Naive thymus-derived CD4-positive, alpha-beta T cell (primary cell): ENCODE measurements at regions of chr1 and their contacts with region 1.

Region 1: GRCh38 chr1:239951511-239952140 is 140.1 kb upstream of the FMN2 start:
- DNase-seq: peak in 8 of 9 donors; percentile 8 to 41 (median 28)
- ATAC-seq: peak; percentile 39
- H3K4me3 ChIP-seq: no peak overlapping the region
- H3K4me3 Mint-ChIP-seq: no peak overlapping the region
- H3K27ac ChIP-seq: no peak overlapping the region
- H3K27ac Mint-ChIP-seq: no peak overlapping the region
- H3K4me1 ChIP-seq: no peaks in the 10 kb centered on the region
- H3K4me1 Mint-ChIP-seq: no peaks in the 10 kb centered on the region
- H3K27me3 ChIP-seq: no peaks in the 10 kb centered on the region
- H3K27me3 Mint-ChIP-seq: peaks cover 0 to 17% (median 4%) of the 10 kb centered on the region in 5 donors

Region 2: DNA sequence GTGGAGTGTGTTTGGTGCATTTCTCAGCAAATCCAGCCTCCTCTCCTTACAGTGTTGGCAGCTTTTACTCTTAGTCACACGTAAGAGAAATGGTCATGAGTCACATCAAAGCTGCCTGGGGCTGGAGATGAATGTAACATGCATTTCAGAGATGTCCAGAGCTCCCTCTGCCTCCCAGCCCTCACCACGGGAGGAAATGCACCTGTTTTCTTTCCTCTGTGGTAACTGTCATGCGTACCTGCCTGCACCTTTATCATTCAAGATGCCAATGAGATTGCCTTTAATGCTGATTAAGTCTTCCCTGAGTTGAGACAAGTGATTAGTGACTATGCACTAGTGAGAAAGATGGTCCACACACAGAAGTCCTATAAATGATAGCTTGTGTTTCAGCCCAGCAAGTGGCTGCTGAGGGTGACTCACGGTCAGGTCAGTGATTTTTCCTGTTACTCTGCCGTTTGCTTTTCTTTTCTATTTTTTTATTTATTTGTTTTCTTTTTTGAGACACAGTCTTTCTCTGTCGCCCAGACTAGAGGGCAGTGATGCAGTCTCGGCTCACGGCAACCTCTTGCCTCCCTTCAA is 137.2 kb before region 1 on chr1:
- CTCF ChIA-PET with region 1: no interaction called
- POLR2A ChIA-PET with region 1: no interaction called
- intact Hi-C with region 1: no loop called
- DNase-seq: no peak
- ATAC-seq: peak; percentile 30
- H3K4me3 ChIP-seq: no peak overlapping the region
- H3K4me3 Mint-ChIP-seq: no peak overlapping the region
- H3K27ac ChIP-seq: no peak overlapping the region
- H3K27ac Mint-ChIP-seq: peak overlapping the region in 2 of 9 donors; percentile 28 to 31
- H3K4me1 ChIP-seq: peaks cover 4 to 11% of the 10 kb centered on the region in 2 donors
- H3K4me1 Mint-ChIP-seq: peaks cover 18 to 32% (median 22%) of the 10 kb centered on the region in 7 donors
- H3K27me3 ChIP-seq: no peaks in the 10 kb centered on the region
- H3K27me3 Mint-ChIP-seq: no peaks in the 10 kb centered on the region

Region 3: DNA sequence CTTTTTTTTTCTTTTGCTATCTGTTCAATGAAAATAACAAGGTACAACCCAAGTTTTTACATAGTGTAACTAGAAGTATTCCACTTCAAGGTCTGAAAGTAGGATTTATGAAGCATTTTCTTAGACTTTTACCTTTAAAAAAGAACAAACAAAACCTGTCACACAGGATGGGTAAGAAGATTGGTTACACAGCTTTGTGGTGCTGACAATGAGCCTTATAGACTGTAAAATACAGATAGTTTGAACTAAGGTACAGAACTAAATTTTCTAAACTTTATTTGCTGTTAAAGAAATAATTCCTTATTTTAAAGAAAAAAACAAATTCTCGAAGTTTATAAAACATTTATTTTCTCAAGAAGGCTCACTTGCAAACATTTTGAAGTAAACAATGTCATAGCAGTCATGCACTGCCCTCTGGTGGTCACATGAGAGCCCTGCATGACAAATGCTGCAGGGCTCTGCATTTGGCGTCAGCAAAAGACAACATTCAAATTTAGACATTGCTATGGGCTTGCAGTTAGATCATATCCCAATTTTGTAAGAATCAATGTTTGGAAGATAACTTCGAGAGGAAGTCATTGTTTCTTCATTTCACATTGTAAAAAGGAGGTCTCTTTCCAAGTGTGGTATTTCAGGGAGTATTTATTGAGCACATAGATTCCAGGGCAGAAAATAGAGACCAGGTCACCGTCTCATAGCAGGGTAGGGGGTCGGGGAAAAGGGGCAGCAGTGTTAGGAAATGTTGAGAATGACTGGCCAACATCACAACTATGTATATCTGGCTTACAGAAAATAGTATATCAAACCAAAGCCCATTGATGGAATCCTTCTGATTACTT is 24.7 kb after region 1 on chr1:
- CTCF ChIA-PET with region 1: no interaction called
- POLR2A ChIA-PET with region 1: no interaction called
- intact Hi-C with region 1: loop called (anchors 1 kb)
- DNase-seq: peak in 6 of 9 donors; percentile 16 to 42 (median 26)
- ATAC-seq: peak; percentile 74
- H3K4me3 ChIP-seq: no peak overlapping the region
- H3K4me3 Mint-ChIP-seq: no peak overlapping the region
- H3K27ac ChIP-seq: no peak overlapping the region
- H3K27ac Mint-ChIP-seq: no peak overlapping the region
- H3K4me1 ChIP-seq: no peaks in the 10 kb centered on the region
- H3K4me1 Mint-ChIP-seq: no peaks in the 10 kb centered on the region
- H3K27me3 ChIP-seq: no peaks in the 10 kb centered on the region
- H3K27me3 Mint-ChIP-seq: peaks cover 0 to 20% (median 8%) of the 10 kb centered on the region in 5 donors

Region 4: GRCh38 chr1:239987103-239987745 is 35.6 kb after region 1 on chr1:
- CTCF ChIA-PET with region 1: no interaction called
- POLR2A ChIA-PET with region 1: no interaction called
- intact Hi-C with region 1: loop called in 1 of 2 experiments (anchors 1 kb)
- DNase-seq: no peak
- ATAC-seq: no peak
- H3K4me3 ChIP-seq: no peak overlapping the region
- H3K4me3 Mint-ChIP-seq: no peak overlapping the region
- H3K27ac ChIP-seq: no peak overlapping the region
- H3K27ac Mint-ChIP-seq: no peak overlapping the region
- H3K4me1 ChIP-seq: no peaks in the 10 kb centered on the region
- H3K4me1 Mint-ChIP-seq: no peaks in the 10 kb centered on the region
- H3K27me3 ChIP-seq: no peaks in the 10 kb centered on the region
- H3K27me3 Mint-ChIP-seq: peaks cover 0 to 35% (median 17%) of the 10 kb centered on the region in 5 donors

Region 5: DNA sequence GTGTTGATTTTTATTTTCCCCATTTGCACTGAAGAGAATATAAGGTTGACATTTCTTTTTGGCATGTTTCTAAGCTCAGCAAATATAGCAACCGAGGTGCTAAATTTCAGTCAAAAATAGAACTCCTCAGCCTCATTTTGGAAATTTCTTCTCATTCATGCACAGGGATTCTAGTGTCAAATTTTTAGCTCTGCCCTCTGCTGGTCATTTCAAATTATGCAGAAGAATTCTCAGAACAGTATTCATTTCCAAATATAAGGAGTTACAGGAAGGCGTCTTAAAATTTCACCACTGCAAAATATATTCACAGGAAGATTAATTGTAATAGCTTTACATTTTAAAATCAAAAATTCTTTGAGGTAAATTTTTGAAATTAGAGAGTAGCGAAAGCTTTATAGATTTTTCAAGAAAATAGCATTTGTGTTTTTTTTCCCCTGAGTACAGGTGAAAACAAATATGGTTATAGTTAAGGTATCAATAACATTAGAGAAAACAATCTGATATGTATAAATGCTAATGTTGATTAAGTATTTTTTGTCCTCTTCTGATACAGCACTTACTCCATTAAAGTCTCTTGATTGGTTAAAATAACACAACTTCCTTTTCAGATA is 198.0 kb after region 1 on chr1:
- CTCF ChIA-PET with region 1: no interaction called
- POLR2A ChIA-PET with region 1: no interaction called
- intact Hi-C with region 1: loop called in 1 of 2 experiments (anchors 2 kb)
- DNase-seq: peak in 1 of 9 donors; percentile 0
- ATAC-seq: no peak
- H3K4me3 ChIP-seq: no peak overlapping the region
- H3K4me3 Mint-ChIP-seq: no peak overlapping the region
- H3K27ac ChIP-seq: no peak overlapping the region
- H3K27ac Mint-ChIP-seq: no peak overlapping the region
- H3K4me1 ChIP-seq: no peaks in the 10 kb centered on the region
- H3K4me1 Mint-ChIP-seq: no peaks in the 10 kb centered on the region
- H3K27me3 ChIP-seq: no peaks in the 10 kb centered on the region
- H3K27me3 Mint-ChIP-seq: peaks cover 0 to 16% (median 0%) of the 10 kb centered on the region in 5 donors